ENCODE measurements at regions of chr4 and their contacts with region 1.

Region 1: DNA sequence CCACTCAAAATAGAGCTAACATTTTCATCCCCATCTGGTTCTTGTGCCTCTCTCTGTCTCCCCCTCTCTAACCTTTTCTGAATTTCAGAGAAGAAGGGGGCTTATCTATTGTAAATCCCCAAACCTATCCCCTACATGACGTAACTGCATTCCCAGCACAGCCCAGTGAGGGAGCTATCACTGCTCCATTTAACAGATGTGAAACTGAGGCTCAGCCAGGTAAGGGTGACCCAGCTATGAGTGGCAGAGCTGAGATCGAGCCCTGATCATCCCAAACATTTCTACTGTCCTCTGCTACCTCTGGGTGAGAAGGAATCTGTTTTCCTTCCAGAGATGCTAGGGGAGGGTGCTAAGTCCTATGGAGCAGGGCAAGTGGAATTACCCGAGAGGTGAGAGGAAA is 107.5 kb downstream of the SLC2A9 start:
- DNase-seq: no peak
- H3K4me3 ChIP-seq: no peak overlapping the region
- H3K27ac ChIP-seq: no peak overlapping the region
- H3K4me1 ChIP-seq: no peaks in the 10 kb centered on the region
- H3K27me3 ChIP-seq: no peaks in the 10 kb centered on the region
- CTCF ChIP-seq: no peak

Region 2: DNA sequence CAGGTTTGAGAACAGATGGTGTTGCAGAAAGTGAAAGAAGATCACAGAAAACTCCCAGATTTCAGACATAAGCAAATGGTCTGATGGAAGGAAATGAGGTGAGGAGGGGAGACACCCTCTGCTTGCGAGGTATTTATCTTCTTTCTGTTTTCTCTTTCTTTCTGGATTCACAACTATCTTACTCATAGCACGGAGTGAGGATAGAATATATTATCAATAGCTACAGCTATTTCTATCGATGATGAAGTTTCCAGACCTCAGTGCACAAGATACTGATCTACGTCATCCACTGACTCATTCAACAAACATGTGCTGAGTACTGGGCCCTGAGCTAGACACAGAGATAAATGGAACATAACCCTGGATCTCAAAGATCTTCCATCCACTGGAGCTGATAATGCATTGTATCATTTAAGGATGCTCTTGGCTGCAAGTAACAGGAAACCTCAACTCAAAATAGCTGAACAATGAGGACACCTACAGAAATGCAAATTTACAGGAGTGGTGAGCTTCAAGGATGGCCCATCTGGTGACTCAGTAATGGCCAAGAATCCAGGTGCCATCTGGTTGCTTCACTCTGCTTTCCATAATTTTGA is 86.2 kb after region 1 on chr4:
- CTCF ChIA-PET with region 1: no interaction called
- dilution Hi-C with region 1: loop called (anchors 5 kb)
- in situ Hi-C with region 1: no loop called
- intact Hi-C with region 1: loop called (anchors 5 kb)
- DNase-seq: peak; percentile 75
- H3K4me3 ChIP-seq: no peak overlapping the region
- H3K27ac ChIP-seq: no peak overlapping the region
- H3K4me1 ChIP-seq: peaks cover 51% of the 10 kb centered on the region
- H3K27me3 ChIP-seq: no peaks in the 10 kb centered on the region
- CTCF ChIP-seq: no peak

Measured in mammary epithelial cell (primary cell).